MCF 10A (cell line): ENCODE measurements at regions of chr4 and their contacts with region 1.

Region 1: GRCh38 chr4:112296949-112297880 is at the start of gene ALPK1:
- DNase-seq: peak; percentile 92
- H3K4me3 Mint-ChIP-seq: peak within 1 kb of the TSS; percentile 72
- H3K27ac Mint-ChIP-seq: peak within 1 kb of the TSS; percentile 91
- H3K4me1 Mint-ChIP-seq: no peaks in the 10 kb centered on the region
- H3K27me3 Mint-ChIP-seq: no peaks in the 10 kb centered on the region
- CTCF ChIP-seq: no peak
- total RNA-seq, gene ALPK1: 20.3 and 41.0 TPM in 2 replicates

Region 2: DNA sequence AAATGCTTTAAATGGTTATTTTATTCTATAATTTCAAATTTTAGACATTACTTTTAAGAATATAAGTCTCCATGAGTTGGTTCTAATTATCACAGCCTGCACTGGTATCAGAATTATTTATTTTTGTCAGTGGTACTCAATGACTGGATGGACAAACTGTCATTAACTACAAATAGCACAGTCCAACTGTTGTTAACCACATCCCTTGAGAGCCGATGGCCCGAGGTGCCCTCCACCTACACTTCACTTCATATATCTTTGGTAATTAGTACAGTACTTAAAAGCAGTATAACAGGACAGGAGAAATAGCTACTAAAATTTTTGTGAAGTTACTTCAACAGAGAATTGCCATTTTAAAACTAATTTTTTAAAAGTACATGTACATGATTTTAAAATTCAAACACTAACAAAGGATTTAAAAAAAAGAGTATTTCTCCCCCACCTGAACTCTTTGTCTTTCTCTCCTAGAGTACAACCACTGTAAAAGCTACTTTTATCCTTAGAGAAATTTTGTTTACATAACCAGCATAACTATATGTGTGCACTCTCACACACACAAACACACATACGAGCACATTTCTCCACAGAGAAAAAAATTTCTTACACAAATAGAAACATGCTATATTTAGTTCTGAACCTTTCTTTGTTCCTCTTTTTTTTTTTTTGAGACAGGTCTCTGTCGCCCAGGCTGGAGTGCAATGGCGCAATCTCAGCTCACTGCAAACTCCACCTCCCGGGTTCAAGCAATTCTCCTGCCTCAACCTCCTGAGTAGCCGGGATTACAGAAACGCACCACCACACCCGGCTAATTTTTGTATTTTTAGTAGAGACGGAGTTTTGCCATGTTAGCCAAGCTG is 18.0 kb before region 1 on chr4:
- CTCF ChIA-PET with region 1: no interaction called
- POLR2A ChIA-PET with region 1: interaction called, 106 read pairs
- intact Hi-C with region 1: no loop called
- DNase-seq: peak; percentile 17
- H3K4me3 Mint-ChIP-seq: peak overlapping the region; percentile 67
- H3K27ac Mint-ChIP-seq: peak overlapping the region; percentile 61
- H3K4me1 Mint-ChIP-seq: peaks cover 51% of the 10 kb centered on the region
- H3K27me3 Mint-ChIP-seq: no peaks in the 10 kb centered on the region
- CTCF ChIP-seq: no peak

Region 3: DNA sequence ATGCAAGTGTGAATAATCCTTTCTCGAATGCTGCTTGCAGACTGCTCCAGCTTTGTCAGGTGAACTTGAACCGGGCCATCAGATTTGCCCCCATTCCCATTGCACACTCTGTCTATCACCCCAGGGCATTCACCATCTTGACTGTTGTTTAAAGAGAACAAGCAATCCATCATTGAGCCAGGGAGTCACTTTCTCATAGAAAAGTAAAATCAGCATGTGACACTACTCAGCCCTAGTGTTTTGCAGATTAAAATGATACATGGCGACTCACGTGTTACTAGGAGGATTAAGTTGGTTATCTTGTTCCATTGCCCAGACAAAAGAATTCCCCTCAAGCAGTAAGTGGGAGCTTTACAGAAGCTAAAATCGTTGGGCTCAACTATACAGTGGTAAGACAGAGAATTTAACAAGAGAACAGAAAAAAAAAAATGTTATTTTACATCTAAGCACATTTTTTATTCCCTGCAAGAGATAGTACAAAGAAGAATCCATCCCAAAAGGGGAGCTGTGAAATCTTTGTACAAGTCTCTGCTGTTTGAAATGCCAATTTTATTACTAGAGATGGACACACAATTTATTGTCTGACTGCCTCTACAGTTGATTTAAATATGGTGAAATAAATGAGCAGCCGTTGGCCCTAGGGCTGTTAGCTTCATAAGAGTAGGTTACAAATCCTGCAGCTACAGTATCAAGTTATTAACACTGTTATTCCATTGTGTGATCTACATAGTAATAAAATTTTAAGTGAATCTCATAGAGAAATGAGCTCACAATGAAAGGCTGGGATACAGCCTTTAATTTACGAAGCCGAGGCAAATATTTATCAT is 151.3 kb after region 1 on chr4:
- CTCF ChIA-PET with region 1: no interaction called
- POLR2A ChIA-PET with region 1: no interaction called
- intact Hi-C with region 1: no loop called
- DNase-seq: peak; percentile 10
- H3K4me3 Mint-ChIP-seq: no peak overlapping the region
- H3K27ac Mint-ChIP-seq: no peak overlapping the region
- H3K4me1 Mint-ChIP-seq: no peaks in the 10 kb centered on the region
- H3K27me3 Mint-ChIP-seq: no peaks in the 10 kb centered on the region
- CTCF ChIP-seq: no peak